B cell (primary cell): ENCODE measurements at regions of chr6 and their contacts with region 1.

Region 1: GRCh38 chr6:7725849-7726415 is at the start of gene BMP6:
- DNase-seq: peak; percentile 86
- ATAC-seq: peak; percentile 82
- H3K4me3 ChIP-seq: peak within 1 kb of the TSS; percentile 35 to 63 (median 51)
- H3K4me3 Mint-ChIP-seq: peak within 1 kb of the TSS; percentile 89
- H3K27ac ChIP-seq: no peak within 1 kb of the TSS
- H3K27ac Mint-ChIP-seq: no peak within 1 kb of the TSS
- H3K4me1 ChIP-seq: peaks cover 31 to 38% of the 10 kb centered on the region in 2 donors
- H3K4me1 Mint-ChIP-seq: peaks cover 30% of the 10 kb centered on the region
- H3K27me3 ChIP-seq: peaks cover 0 to 66% (median 45%) of the 10 kb centered on the region in 4 experiments
- H3K27me3 Mint-ChIP-seq: peaks cover 69% of the 10 kb centered on the region
- CTCF ChIP-seq: no peak
- total RNA-seq, gene BMP6: 2.2 and 2.9 TPM in 2 replicates

Region 2: GRCh38 chr6:7697820-7698623 is 27.9 kb before region 1 on chr6:
- CTCF ChIA-PET with region 1: interaction called, 17 read pairs
- POLR2A ChIA-PET with region 1: no interaction called
- intact Hi-C with region 1: no loop called
- DNase-seq: peak; percentile 62
- ATAC-seq: peak; percentile 75
- H3K4me3 ChIP-seq: no peak overlapping the region
- H3K4me3 Mint-ChIP-seq: peak overlapping the region; percentile 11
- H3K27ac ChIP-seq: no peak overlapping the region
- H3K27ac Mint-ChIP-seq: peak overlapping the region; percentile 62
- H3K4me1 ChIP-seq: peaks cover 3 to 11% of the 10 kb centered on the region in 2 donors
- H3K4me1 Mint-ChIP-seq: peaks cover 11% of the 10 kb centered on the region
- H3K27me3 ChIP-seq: peaks cover 0 to 10% (median 0%) of the 10 kb centered on the region in 4 experiments
- H3K27me3 Mint-ChIP-seq: peaks cover 28% of the 10 kb centered on the region
- CTCF ChIP-seq: no peak

Region 3: GRCh38 chr6:7910654-7911344 is 184.9 kb after region 1 on chr6 and contains the start of gene TXNDC5:
- CTCF ChIA-PET with region 1: interaction called, 3 read pairs
- POLR2A ChIA-PET with region 1: no interaction called
- intact Hi-C with region 1: loop called (anchors 10 kb)
- DNase-seq: peak; percentile 81
- ATAC-seq: peak; percentile 85
- H3K4me3 ChIP-seq: peak within 1 kb of the TSS; percentile 30 to 82 (median 61)
- H3K4me3 Mint-ChIP-seq: peak within 1 kb of the TSS; percentile 82
- H3K27ac ChIP-seq: peak within 1 kb of the TSS; percentile 74 to 90
- H3K27ac Mint-ChIP-seq: peak within 1 kb of the TSS; percentile 77
- H3K4me1 ChIP-seq: peaks cover 27 to 71% of the 10 kb centered on the region in 2 donors
- H3K4me1 Mint-ChIP-seq: peaks cover 22% of the 10 kb centered on the region
- H3K27me3 ChIP-seq: no peaks in the 10 kb centered on the region
- H3K27me3 Mint-ChIP-seq: no peaks in the 10 kb centered on the region
- CTCF ChIP-seq: no peak
- total RNA-seq, gene TXNDC5: 57.5 and 62.6 TPM in 2 replicates

Region 4: DNA sequence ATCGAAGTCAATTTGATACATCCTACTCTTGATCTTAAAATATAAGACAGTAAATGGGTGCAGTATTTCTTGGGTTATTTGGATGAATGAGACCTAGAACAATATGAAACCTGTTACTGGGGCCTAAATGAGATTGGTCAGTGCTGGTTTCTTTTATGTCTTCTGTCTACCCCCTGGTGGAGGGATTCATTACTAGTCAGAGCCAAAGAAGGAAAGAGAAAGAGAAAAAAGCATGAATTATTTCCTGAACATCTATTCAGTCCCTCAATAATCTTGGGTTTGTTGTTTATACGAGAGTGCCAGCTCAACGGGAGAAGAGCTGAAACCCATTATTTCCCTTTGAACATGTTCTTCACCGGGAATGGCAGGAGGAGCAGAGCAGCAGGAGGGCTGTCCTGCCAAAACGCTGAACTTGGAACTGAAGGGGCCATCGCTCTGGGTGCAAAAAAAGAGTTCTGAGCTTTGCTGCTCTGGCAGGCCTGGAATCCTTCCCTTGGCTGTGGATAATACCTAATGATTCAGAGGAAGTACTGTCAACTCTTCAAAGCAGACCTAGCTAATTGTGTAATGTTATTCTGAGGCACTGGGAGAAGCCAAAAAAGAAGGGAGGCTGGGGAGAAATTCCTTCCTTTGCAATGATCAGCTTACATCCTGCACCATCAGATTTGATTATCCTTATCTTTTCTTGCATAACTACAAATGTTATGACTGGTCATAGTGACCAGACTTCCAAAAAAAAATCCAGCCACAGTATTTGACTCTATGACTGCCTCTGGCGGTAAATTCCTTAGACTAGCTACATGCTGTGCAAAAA is 266.3 kb after region 1 on chr6:
- CTCF ChIA-PET with region 1: interaction called, 61 read pairs
- POLR2A ChIA-PET with region 1: no interaction called
- intact Hi-C with region 1: loop called (anchors 1 kb)
- DNase-seq: peak; percentile 60
- ATAC-seq: peak; percentile 41
- H3K4me3 ChIP-seq: no peak overlapping the region
- H3K4me3 Mint-ChIP-seq: no peak overlapping the region
- H3K27ac ChIP-seq: no peak overlapping the region
- H3K27ac Mint-ChIP-seq: no peak overlapping the region
- H3K4me1 ChIP-seq: peaks cover 5 to 6% of the 10 kb centered on the region in 2 donors
- H3K4me1 Mint-ChIP-seq: peaks cover 5% of the 10 kb centered on the region
- H3K27me3 ChIP-seq: no peaks in the 10 kb centered on the region
- H3K27me3 Mint-ChIP-seq: no peaks in the 10 kb centered on the region
- CTCF ChIP-seq: peak; percentile 51

Region 5: DNA sequence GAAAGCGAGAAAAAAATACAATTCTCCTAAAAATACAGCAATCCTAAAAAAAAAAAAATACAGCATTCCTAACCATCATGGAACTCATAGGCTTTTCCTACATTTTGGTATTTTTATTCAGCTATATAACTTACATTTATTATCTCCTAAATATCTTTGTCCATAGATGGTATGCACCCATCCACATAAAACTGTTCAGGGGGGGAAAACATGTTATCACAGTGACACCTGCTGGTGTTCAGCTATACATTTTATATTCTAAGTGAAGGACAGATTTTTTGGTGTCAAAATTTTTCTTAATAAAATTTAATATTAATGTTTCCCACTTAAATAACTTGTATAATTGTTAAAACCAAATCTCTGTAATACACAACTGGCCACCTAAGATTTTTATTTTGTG is 280.3 kb after region 1 on chr6:
- CTCF ChIA-PET with region 1: interaction called, 30 read pairs
- POLR2A ChIA-PET with region 1: no interaction called
- intact Hi-C with region 1: loop called (anchors 1 kb)
- DNase-seq: peak; percentile 58
- ATAC-seq: no peak
- H3K4me3 ChIP-seq: no peak overlapping the region
- H3K4me3 Mint-ChIP-seq: no peak overlapping the region
- H3K27ac ChIP-seq: no peak overlapping the region
- H3K27ac Mint-ChIP-seq: no peak overlapping the region
- H3K4me1 ChIP-seq: no peaks in the 10 kb centered on the region
- H3K4me1 Mint-ChIP-seq: no peaks in the 10 kb centered on the region
- H3K27me3 ChIP-seq: no peaks in the 10 kb centered on the region
- H3K27me3 Mint-ChIP-seq: peaks cover 3% of the 10 kb centered on the region
- CTCF ChIP-seq: peak; percentile 75

Region 6: GRCh38 chr6:8219352-8219943 is 493.5 kb after region 1 on chr6:
- CTCF ChIA-PET with region 1: interaction called, 63 read pairs
- POLR2A ChIA-PET with region 1: no interaction called
- intact Hi-C with region 1: no loop called
- DNase-seq: peak; percentile 59
- ATAC-seq: peak; percentile 36
- H3K4me3 ChIP-seq: no peak overlapping the region
- H3K4me3 Mint-ChIP-seq: no peak overlapping the region
- H3K27ac ChIP-seq: no peak overlapping the region
- H3K27ac Mint-ChIP-seq: no peak overlapping the region
- H3K4me1 ChIP-seq: no peaks in the 10 kb centered on the region
- H3K4me1 Mint-ChIP-seq: no peaks in the 10 kb centered on the region
- H3K27me3 ChIP-seq: peaks cover 0 to 5% (median 0%) of the 10 kb centered on the region in 4 experiments
- H3K27me3 Mint-ChIP-seq: peaks cover 11% of the 10 kb centered on the region
- CTCF ChIP-seq: peak; percentile 91